Posterior cingulate gyrus (tissue), 11 donors: ENCODE measurements at regions of chr15 and their contacts with region 1.

Region 1: GRCh38 chr15:73712088-73712487 is 27.9 kb downstream of the CD276 start:
- DNase-seq: peak in 7 of 10 donors; percentile 16 to 88 (median 37)

Region 2: GRCh38 chr15:73127301-73127936 is 584.7 kb before region 1 on chr15:
- intact Hi-C with region 1: no loop called
- DNase-seq: peak in 1 of 10 donors; percentile 11

Region 3: DNA sequence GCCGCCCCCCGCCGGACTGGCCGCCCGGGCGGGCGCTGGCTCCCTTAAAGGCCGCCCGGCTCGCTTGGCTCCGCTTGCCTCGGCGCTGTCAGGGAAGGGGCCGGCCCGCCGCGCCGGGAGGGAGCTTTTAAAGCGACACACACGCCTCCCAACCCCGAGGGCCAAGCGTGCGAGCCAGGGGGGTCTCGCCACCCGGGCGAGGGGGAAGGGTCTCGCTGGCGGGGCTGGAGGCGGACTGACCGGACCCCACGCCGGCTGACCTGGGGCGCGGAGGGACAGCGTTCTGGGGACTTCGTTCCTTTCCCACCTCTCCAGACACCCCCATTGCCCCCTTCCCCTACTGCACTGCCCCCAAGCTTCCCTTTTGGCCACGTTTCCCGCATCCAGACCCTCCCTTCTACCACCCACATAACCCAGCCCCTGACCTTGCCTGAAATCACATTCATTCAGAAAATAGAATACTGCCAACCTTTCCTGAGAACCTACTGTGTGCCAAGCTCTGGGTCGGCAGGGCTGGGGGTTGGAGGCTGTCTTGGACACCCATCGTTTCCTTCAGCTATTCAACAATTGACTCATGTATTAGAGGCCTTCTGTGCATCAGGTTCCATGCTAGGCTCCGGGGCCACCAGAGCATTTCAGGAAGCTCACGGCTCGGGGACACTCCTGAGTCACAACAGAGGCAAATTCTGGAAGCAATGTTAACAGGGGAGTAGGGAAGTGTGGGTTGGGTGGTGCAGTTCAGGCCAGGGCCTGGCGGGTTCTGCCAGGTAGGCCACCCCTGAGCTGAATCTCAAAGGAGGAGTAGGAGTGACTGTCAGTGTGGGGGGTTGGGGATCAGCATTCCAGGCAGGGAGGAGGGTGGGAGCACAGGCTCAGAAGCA is 41.4 kb after region 1 on chr15 and contains the start of gene INSYN1:
- intact Hi-C with region 1: no loop called
- DNase-seq: peak in 7 of 10 donors; percentile 50 to 93 (median 62)

Region 4: GRCh38 chr15:73908030-73908821 is 196.1 kb after region 1 on chr15:
- intact Hi-C with region 1: loop called (anchors 5 kb)
- DNase-seq: peak; percentile 72 to 97 (median 88)